PC-9 (cell line): ENCODE measurements at regions of chr13 and their contacts with region 1.

Region 1: DNA sequence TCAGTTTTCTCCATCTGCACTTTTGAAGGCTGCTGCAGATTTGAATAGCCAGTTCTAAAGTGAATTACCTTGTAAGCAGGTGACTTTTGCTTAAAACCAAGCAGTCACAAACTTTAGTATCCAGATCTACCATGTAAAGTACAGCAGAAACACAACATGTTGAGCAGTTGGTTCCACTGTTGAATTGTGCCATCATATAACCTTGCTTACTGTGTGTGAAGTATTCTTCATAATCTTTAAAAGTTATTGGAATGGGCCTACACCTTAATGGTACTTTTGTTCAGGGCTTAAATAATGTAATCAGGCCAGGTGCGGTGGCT is 23.2 kb upstream of the MTUS2 start:
- DNase-seq: no peak
- H3K4me3 ChIP-seq: no peak overlapping the region
- H3K27ac ChIP-seq: no peak overlapping the region
- H3K4me1 ChIP-seq: no peaks in the 10 kb centered on the region
- H3K27me3 ChIP-seq: peaks cover 56% of the 10 kb centered on the region
- CTCF ChIP-seq: no peak; the same call in 1 of the 2 replicates

Region 2: GRCh38 chr13:28329395-28330158 is 467.3 kb before region 1 on chr13:
- CTCF ChIA-PET with region 1: interaction called, 15 read pairs
- POLR2A ChIA-PET with region 1: no interaction called
- intact Hi-C with region 1: no loop called
- DNase-seq: no peak
- H3K4me3 ChIP-seq: no peak overlapping the region
- H3K27ac ChIP-seq: no peak overlapping the region
- H3K4me1 ChIP-seq: no peaks in the 10 kb centered on the region
- H3K27me3 ChIP-seq: peaks cover 60% of the 10 kb centered on the region
- CTCF ChIP-seq: no peak

Region 3: GRCh38 chr13:28679628-28680027 is 117.3 kb before region 1 on chr13:
- CTCF ChIA-PET with region 1: no interaction called
- POLR2A ChIA-PET with region 1: no interaction called
- intact Hi-C with region 1: loop called (anchors 1 kb)
- DNase-seq: no peak
- H3K4me3 ChIP-seq: no peak overlapping the region
- H3K27ac ChIP-seq: no peak overlapping the region
- H3K4me1 ChIP-seq: no peaks in the 10 kb centered on the region
- H3K27me3 ChIP-seq: no peaks in the 10 kb centered on the region
- CTCF ChIP-seq: peak; percentile 65

Region 4: DNA sequence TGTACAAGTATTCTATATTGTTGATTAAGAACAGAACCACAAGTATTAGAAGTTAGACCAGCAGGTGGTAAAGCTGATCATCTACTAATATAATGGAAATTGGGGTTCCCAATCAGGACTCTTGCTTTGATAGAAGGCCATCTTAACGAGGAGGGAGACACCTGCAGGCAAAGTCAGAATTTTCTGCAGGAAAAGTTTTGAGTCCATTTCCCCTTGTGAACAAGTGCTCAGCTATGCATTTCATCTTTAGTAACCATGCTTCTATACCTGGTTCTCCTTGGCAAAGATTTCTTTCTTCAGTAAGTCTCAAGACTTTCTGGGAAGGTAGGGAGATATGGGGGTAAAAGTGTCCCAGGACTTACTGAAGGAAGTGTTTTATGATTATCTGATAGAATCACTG is 1784.7 kb after region 1 on chr13:
- CTCF ChIA-PET with region 1: interaction called, 12 read pairs
- POLR2A ChIA-PET with region 1: no interaction called
- intact Hi-C with region 1: no loop called
- DNase-seq: peak in 1 of 2 experiments; percentile 5
- H3K4me3 ChIP-seq: no peak overlapping the region
- H3K27ac ChIP-seq: no peak overlapping the region
- H3K4me1 ChIP-seq: peaks cover 22% of the 10 kb centered on the region
- H3K27me3 ChIP-seq: no peaks in the 10 kb centered on the region
- CTCF ChIP-seq: peak; percentile 56